Mammary epithelial cell (primary cell): ENCODE measurements at regions of chr5 and their contacts with region 1.

Region 1: GRCh38 chr5:113507601-113508000 is 5.9 kb upstream of the YTHDC2 start:
- DNase-seq: no peak
- H3K4me3 ChIP-seq: no peak overlapping the region
- H3K27ac ChIP-seq: no peak overlapping the region
- H3K4me1 ChIP-seq: peaks cover 32% of the 10 kb centered on the region
- H3K27me3 ChIP-seq: no peaks in the 10 kb centered on the region
- CTCF ChIP-seq: no peak

Region 2: DNA sequence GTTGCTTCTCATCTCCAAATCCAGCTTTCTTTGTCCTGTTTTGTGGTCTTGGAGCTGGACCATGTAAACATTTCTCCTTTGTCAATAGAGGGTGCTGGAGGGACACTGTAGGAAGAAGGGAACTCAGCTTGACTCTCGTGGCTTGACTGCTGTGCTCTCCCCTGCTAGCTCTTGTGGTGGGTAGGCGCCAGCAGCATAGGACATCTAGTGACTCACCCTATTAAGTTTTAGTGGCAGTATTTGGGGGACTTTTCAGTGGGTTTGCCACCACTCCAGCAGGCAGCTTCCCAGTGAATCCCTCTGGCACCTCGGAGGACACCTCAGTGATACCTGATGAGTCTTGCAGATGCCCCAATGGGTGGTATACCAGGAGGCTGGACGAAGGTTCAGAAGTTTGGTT is 170.6 kb before region 1 on chr5:
- CTCF ChIA-PET with region 1: interaction called, 11 read pairs
- dilution Hi-C with region 1: no loop called
- in situ Hi-C with region 1: loop called in 1 of 2 experiments (anchors 10 kb)
- intact Hi-C with region 1: loop called (anchors 1 kb)
- DNase-seq: peak; percentile 58
- H3K4me3 ChIP-seq: no peak overlapping the region
- H3K27ac ChIP-seq: no peak overlapping the region
- H3K4me1 ChIP-seq: no peaks in the 10 kb centered on the region
- H3K27me3 ChIP-seq: no peaks in the 10 kb centered on the region
- CTCF ChIP-seq: peak; percentile 38 to 59

Region 3: DNA sequence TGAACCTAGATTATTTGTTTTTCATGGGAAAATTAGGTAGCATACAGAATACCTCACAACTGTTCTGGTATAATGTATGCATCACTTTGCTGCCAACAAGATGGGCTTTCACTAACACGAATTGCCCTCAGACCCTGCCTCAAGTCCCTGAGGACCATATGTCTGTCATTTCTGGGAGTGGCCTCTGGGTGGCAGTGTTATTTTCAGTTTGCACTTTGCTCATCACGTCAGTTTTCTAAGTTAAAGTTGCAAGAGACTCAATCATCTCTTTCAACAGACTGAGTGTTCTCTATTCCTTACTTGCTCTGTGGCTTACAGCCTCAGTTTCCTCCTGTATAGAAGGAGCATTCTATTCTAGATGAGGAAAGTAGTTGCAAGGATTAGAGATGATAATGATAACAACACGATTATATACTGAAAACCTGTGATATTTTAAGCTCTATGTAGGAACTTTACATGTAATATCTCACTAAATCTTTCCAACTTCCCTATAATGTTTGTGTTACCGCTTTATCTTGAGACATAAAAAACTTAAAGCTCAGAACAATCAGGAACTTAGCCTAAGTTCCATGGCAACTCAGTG is 128.6 kb before region 1 on chr5:
- CTCF ChIA-PET with region 1: interaction called, 5 read pairs
- dilution Hi-C with region 1: no loop called
- in situ Hi-C with region 1: loop called in 1 of 2 experiments (anchors 10 kb)
- intact Hi-C with region 1: loop called (anchors 1 kb)
- DNase-seq: peak; percentile 50
- H3K4me3 ChIP-seq: no peak overlapping the region
- H3K27ac ChIP-seq: no peak overlapping the region
- H3K4me1 ChIP-seq: peaks cover 44% of the 10 kb centered on the region
- H3K27me3 ChIP-seq: no peaks in the 10 kb centered on the region
- CTCF ChIP-seq: peak; percentile 76 to 79

Region 4: GRCh38 chr5:113524927-113525326 is 17.3 kb after region 1 on chr5:
- CTCF ChIA-PET with region 1: no interaction called
- dilution Hi-C with region 1: no loop called
- in situ Hi-C with region 1: no loop called
- intact Hi-C with region 1: no loop called
- DNase-seq: no peak
- H3K4me3 ChIP-seq: no peak overlapping the region
- H3K27ac ChIP-seq: no peak overlapping the region
- H3K4me1 ChIP-seq: peaks cover 3% of the 10 kb centered on the region
- H3K27me3 ChIP-seq: no peaks in the 10 kb centered on the region
- CTCF ChIP-seq: no peak

Region 5: GRCh38 chr5:113675166-113675565 is 167.6 kb after region 1 on chr5:
- CTCF ChIA-PET with region 1: no interaction called
- dilution Hi-C with region 1: no loop called
- in situ Hi-C with region 1: no loop called
- intact Hi-C with region 1: no loop called
- DNase-seq: peak; percentile 12
- H3K4me3 ChIP-seq: no peak overlapping the region
- H3K27ac ChIP-seq: peak overlapping the region; percentile 32
- H3K4me1 ChIP-seq: no peaks in the 10 kb centered on the region
- H3K27me3 ChIP-seq: no peaks in the 10 kb centered on the region
- CTCF ChIP-seq: no peak

Region 6: DNA sequence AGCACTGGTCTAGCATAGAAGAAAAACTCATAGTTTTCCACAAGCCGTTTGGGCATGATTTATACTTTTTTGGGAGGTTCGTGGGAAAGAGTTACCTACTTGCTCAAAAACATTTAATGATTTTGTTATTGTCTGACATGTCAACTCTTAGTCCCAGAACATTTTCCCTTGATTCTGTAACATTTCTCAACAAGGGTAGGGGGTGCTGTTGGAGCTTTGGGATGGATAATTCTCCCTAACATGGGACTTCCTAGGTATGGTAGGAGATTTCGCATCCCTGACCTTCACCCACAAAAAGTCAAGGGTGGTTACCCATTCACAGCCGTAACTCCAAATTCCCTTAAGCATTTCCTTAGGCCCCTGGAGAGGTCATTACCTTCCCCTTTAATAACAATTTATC is 383.9 kb after region 1 on chr5:
- CTCF ChIA-PET with region 1: no interaction called
- dilution Hi-C with region 1: no loop called
- in situ Hi-C with region 1: no loop called
- intact Hi-C with region 1: no loop called
- DNase-seq: no peak
- H3K4me3 ChIP-seq: no peak overlapping the region
- H3K27ac ChIP-seq: no peak overlapping the region
- H3K4me1 ChIP-seq: no peaks in the 10 kb centered on the region
- H3K27me3 ChIP-seq: peaks cover 3% of the 10 kb centered on the region
- CTCF ChIP-seq: no peak

Region 7: DNA sequence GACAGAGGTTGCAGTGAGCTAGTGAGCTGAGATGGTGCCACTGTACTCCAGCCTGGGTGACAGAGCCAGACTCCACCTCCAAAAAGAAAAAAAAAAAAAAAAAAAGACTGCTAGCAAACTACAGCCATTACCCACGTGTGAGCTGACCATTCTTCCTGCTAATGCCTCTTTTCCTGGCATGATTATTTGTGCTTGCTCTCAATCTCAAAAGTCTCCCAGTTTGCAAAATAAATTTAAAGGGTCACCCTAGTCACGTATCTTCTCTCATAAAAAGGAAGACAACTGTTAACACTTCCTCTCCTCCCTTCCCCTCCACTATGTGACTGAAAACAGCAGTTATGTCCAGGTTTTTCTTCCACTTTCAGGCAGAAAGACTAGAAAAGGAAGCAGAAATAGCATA is 1624.9 kb after region 1 on chr5:
- CTCF ChIA-PET with region 1: no interaction called
- dilution Hi-C with region 1: no loop called
- in situ Hi-C with region 1: no loop called
- intact Hi-C with region 1: no loop called
- DNase-seq: no peak
- H3K4me3 ChIP-seq: no peak overlapping the region
- H3K27ac ChIP-seq: no peak overlapping the region
- H3K4me1 ChIP-seq: no peaks in the 10 kb centered on the region
- H3K27me3 ChIP-seq: no peaks in the 10 kb centered on the region
- CTCF ChIP-seq: no peak